Caco-2 (cell line): ENCODE measurements at regions of chr11 and their contacts with region 1.

Region 1: DNA sequence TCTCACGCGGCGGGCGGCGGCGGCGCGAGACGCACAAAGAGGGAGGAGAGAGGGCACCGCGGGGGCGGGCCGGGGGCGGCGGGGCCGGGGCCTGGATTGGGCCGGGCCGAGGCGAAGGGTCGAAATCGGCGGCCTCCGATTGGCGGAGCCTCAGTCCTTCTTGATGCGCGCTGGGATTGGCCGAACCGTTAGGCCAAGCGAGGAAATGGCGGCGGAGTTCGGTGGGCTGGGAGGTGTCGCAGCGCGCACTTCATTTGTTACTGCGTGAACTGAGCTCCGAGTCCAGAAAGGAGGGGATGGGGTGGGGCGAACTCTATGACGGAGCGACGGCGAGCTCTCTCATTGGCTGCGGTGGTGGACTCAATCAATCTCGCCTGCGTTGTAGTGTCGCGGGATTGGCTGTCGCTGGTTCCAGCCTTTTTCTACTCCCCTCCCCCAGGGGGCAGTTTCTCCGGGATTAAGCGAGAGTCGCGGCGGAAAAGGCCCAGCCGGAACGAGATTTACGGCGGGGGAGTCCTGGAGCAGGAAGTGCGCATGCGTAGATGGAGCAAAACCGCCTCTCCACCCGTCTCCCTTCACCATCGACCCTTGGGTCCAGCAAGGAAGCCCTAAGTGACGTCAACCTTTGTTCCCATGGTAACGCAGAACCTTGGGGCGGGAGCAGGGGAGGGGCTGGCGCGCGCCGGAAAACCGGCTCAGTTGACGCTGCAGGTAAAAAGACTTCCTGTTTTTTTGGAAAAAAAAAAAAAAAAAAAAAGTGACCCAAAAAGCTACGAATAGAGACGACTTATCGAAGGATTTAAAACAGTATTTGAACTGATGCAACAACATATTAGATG is at the start of gene SF1:
- DNase-seq: peak; percentile 100
- H3K4me3 ChIP-seq: peak within 1 kb of the TSS; percentile 99
- H3K4me3 Mint-ChIP-seq: peak within 1 kb of the TSS; percentile 91
- H3K27ac Mint-ChIP-seq: peak within 1 kb of the TSS; percentile 99
- H3K4me1 ChIP-seq: peaks cover 17% of the 10 kb centered on the region
- H3K4me1 Mint-ChIP-seq: peaks cover 7% of the 10 kb centered on the region
- H3K27me3 ChIP-seq: no peaks in the 10 kb centered on the region
- H3K27me3 Mint-ChIP-seq: no peaks in the 10 kb centered on the region
- CTCF ChIP-seq: no peak
- total RNA-seq, gene SF1: 359 and 386 TPM in 2 replicates

Region 2: GRCh38 chr11:64698427-64698826 is 80.3 kb before region 1 on chr11:
- CTCF ChIA-PET with region 1: no interaction called
- POLR2A ChIA-PET with region 1: interaction called, 10 read pairs
- intact Hi-C with region 1: no loop called
- DNase-seq: no peak
- H3K4me3 ChIP-seq: no peak overlapping the region
- H3K4me3 Mint-ChIP-seq: no peak overlapping the region
- H3K27ac Mint-ChIP-seq: no peak overlapping the region
- H3K4me1 ChIP-seq: no peaks in the 10 kb centered on the region
- H3K4me1 Mint-ChIP-seq: peaks cover 9% of the 10 kb centered on the region
- H3K27me3 ChIP-seq: peaks cover 2% of the 10 kb centered on the region; the same call in 1 of the 2 replicates
- H3K27me3 Mint-ChIP-seq: peaks cover 9% of the 10 kb centered on the region
- CTCF ChIP-seq: no peak

Region 3: DNA sequence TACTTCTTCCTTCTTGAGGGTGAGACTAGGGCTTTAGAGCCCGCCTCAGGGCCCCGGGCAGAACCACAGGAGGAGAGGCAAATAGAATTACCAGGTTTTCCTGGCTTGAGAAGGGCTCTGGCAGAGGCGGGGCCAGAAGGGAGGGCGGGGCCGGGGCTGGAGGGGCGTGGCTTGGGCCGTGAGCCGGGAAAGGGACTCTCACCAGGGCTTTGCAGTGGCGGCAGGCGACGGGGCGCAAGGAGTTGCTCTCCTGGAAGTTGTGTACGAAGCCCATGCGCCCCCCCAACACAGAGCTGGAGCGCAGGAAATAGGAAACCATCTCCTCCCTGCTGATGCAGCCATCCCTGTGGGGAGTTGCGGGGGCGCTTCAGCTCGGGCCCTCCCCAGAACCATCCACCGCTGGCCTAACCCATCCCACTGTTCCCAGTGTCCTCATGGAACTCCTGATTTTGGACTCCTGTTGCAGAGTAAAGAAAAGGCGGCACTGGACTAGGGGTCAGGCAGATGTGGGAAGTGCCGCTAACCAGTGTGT is 48.8 kb before region 1 on chr11:
- CTCF ChIA-PET with region 1: no interaction called
- POLR2A ChIA-PET with region 1: no interaction called
- intact Hi-C with region 1: no loop called
- DNase-seq: peak in 1 of 2 experiments; percentile 50
- H3K4me3 ChIP-seq: no peak overlapping the region
- H3K4me3 Mint-ChIP-seq: no peak overlapping the region
- H3K27ac Mint-ChIP-seq: no peak overlapping the region
- H3K4me1 ChIP-seq: peaks cover 7% of the 10 kb centered on the region
- H3K4me1 Mint-ChIP-seq: peaks cover 9% of the 10 kb centered on the region
- H3K27me3 ChIP-seq: no peaks in the 10 kb centered on the region
- H3K27me3 Mint-ChIP-seq: no peaks in the 10 kb centered on the region
- CTCF ChIP-seq: no peak

Region 4: GRCh38 chr11:64759561-64760349 is 19.0 kb before region 1 on chr11 and contains the start of gene PYGM:
- CTCF ChIA-PET with region 1: no interaction called
- POLR2A ChIA-PET with region 1: interaction called, 10 read pairs
- intact Hi-C with region 1: no loop called
- DNase-seq: peak in 1 of 2 experiments; percentile 53
- H3K4me3 ChIP-seq: no peak within 1 kb of the TSS
- H3K4me3 Mint-ChIP-seq: no peak within 1 kb of the TSS
- H3K27ac Mint-ChIP-seq: peak within 1 kb of the TSS; percentile 79
- H3K4me1 ChIP-seq: no peaks in the 10 kb centered on the region
- H3K4me1 Mint-ChIP-seq: no peaks in the 10 kb centered on the region
- H3K27me3 ChIP-seq: no peaks in the 10 kb centered on the region
- H3K27me3 Mint-ChIP-seq: no peaks in the 10 kb centered on the region
- CTCF ChIP-seq: no peak
- total RNA-seq, gene PYGM: 0.51 and 1.4 TPM in 2 replicates

Region 5: GRCh38 chr11:64803163-64803845 is 24.6 kb after region 1 on chr11 and contains the start of gene MAP4K2:
- CTCF ChIA-PET with region 1: interaction called, 8 read pairs
- POLR2A ChIA-PET with region 1: interaction called, 18 read pairs
- intact Hi-C with region 1: loop called (anchors 2 kb)
- DNase-seq: peak; percentile 92 to 96
- H3K4me3 ChIP-seq: peak within 1 kb of the TSS; percentile 75
- H3K4me3 Mint-ChIP-seq: peak within 1 kb of the TSS; percentile 87
- H3K27ac Mint-ChIP-seq: peak within 1 kb of the TSS; percentile 76
- H3K4me1 ChIP-seq: peaks cover 20% of the 10 kb centered on the region
- H3K4me1 Mint-ChIP-seq: peaks cover 9% of the 10 kb centered on the region
- H3K27me3 ChIP-seq: no peaks in the 10 kb centered on the region
- H3K27me3 Mint-ChIP-seq: no peaks in the 10 kb centered on the region
- CTCF ChIP-seq: peak; percentile 17 to 42
- total RNA-seq, gene MAP4K2: 16.8 and 21.4 TPM in 2 replicates

Region 6: DNA sequence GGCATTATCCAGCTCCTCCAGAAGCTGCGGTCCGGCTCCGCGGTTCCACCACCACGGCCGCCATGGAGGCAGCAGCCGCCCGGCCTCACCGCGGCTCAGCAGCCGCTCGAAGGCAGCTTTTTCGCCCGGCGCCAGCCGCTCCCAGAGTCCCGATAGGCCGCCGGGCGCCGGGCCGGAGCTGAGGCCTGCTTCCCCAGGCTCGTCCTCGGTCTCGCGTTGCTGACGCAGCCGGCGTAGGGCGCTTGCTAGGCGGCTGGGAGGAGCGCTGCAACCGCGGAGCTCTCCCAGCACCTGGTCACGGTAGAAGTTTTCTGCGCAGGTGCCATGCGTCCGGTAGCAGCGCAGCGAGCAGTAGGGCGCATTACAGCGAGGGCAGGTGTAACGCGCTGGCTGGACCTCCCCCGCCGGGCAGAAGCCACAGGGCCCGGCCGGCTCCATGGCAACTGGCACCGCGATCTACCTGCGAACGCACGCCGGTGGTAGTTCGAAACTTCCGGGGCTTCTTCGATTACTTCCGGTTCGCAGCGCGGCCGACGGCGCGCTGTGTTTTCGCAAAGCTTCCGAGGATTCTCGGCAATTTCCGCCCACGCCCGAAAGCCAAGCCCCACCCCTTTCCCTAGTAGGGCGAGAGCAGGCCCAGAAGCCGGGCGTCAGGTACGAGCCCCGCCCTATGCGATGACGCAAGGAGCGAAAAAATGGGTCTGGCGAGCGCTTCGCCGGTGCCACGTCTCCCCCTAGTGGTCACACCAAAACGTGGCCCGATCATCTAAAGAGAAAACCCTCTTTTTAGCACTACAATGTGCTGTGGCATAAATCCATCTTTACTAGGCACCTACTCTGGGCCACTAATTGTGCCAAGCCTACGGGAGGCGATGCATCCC is 338.7 kb after region 1 on chr11 and contains the start of gene ZNHIT2:
- CTCF ChIA-PET with region 1: interaction called, 7 read pairs
- POLR2A ChIA-PET with region 1: interaction called, 9 read pairs
- intact Hi-C with region 1: loop called (anchors 10 kb)
- DNase-seq: peak; percentile 99
- H3K4me3 ChIP-seq: peak within 1 kb of the TSS; percentile 87
- H3K4me3 Mint-ChIP-seq: peak within 1 kb of the TSS; percentile 83
- H3K27ac Mint-ChIP-seq: peak within 1 kb of the TSS; percentile 92
- H3K4me1 ChIP-seq: peaks cover 25% of the 10 kb centered on the region
- H3K4me1 Mint-ChIP-seq: peaks cover 13% of the 10 kb centered on the region
- H3K27me3 ChIP-seq: no peaks in the 10 kb centered on the region
- H3K27me3 Mint-ChIP-seq: no peaks in the 10 kb centered on the region
- CTCF ChIP-seq: peak; percentile 93 to 94
- total RNA-seq, gene ZNHIT2: 12.2 and 14.7 TPM in 2 replicates